Mammary epithelial cell (primary cell): ENCODE measurements at regions of chr1 and their contacts with region 1.

Region 1: DNA sequence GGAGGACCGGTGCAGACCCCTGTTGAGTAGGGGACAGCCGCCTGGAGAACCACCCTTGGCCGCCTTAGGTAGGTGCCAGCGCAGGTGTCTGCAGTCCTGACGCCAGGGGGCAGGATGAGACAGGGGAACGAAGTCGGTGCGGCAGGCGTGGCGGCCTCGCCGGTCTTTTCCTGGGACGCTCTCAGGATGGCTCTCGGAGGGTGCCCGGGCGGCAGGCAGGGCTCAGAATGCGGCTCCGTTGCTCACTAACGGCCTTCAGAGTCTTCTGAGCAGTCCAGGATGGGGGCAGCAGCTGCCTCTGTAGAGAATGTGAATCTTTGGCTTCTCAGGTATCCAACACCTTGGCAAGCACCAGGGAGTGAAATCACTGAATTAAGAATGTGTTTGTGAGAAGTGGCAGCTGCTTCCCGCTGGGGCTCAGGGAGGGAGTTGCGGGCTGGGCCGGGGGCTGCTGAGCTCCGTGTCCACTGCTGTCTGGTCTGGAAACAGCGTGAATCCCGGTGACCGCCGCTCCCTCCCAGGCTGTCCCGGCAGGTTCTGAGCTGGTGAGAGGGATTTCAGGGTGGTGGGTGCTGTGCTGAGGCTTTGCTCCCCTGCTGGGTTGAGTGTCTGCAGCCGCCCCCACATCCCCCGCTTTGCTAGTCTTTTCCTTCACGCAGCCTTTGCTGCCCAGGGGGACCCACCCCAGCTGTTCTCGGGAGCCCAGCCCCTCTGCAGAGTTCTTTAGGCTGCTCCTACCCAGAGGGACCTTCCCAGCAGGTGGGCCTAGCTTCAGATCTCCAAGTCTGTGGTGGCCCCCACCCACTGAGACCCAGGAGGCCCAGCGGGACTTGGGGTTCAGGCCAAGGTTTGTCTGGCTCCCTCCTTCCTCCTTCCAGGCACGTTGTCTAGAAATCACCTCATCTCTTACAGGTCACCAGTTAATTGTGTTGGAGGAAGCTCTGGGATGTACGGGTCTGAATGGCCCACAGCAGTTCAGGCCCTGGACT is 11.1 kb upstream of the C1orf174 start:
- DNase-seq: peak; percentile 52
- H3K4me3 ChIP-seq: peak overlapping the region in 1 of 3 experiments; percentile 19
- H3K27ac ChIP-seq: no peak overlapping the region
- H3K4me1 ChIP-seq: peaks cover 4% of the 10 kb centered on the region
- H3K27me3 ChIP-seq: no peaks in the 10 kb centered on the region
- CTCF ChIP-seq: peak; percentile 80 to 89

Region 2: GRCh38 chr1:3978990-3979325 is 67.8 kb after region 1 on chr1:
- CTCF ChIA-PET with region 1: no interaction called
- dilution Hi-C with region 1: no loop called
- in situ Hi-C with region 1: no loop called
- intact Hi-C with region 1: no loop called
- DNase-seq: no peak
- H3K4me3 ChIP-seq: no peak overlapping the region
- H3K27ac ChIP-seq: no peak overlapping the region
- H3K4me1 ChIP-seq: no peaks in the 10 kb centered on the region
- H3K27me3 ChIP-seq: no peaks in the 10 kb centered on the region
- CTCF ChIP-seq: no peak

Region 3: GRCh38 chr1:3992103-3992556 is 81.0 kb after region 1 on chr1:
- CTCF ChIA-PET with region 1: no interaction called
- dilution Hi-C with region 1: no loop called
- in situ Hi-C with region 1: no loop called
- intact Hi-C with region 1: no loop called
- DNase-seq: no peak
- H3K4me3 ChIP-seq: no peak overlapping the region
- H3K27ac ChIP-seq: no peak overlapping the region
- H3K4me1 ChIP-seq: no peaks in the 10 kb centered on the region
- H3K27me3 ChIP-seq: no peaks in the 10 kb centered on the region
- CTCF ChIP-seq: no peak

Region 4: DNA sequence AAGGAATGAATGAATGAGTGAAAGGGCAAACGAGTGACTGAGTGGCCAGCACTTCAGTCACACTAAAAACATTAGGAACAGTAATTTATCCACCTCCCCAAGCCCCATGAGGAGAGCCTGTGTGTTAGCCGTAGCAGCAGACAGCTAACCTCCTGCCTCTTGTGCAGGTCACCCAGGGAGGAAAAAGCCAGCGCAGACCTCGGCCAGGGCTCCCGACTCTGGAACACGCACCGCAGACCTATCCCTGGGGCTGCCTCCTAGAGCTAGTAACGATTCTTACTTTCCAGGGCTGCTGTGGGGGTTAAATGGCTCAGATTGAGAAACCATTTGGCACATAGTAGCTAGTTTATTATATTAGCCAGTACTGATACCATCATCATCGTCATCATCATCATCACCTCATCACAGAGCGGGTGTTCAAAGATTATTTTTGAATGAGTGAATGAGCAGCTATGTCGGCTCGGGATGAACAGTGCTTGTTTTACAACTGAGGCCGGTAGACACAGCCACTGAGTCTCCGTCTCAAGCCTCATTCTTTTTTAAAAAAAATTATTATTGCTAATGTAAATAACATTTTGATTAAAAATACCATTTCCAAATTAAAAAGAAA is 729.7 kb after region 1 on chr1:
- CTCF ChIA-PET with region 1: no interaction called
- dilution Hi-C with region 1: no loop called
- in situ Hi-C with region 1: loop called in 1 of 2 experiments (anchors 10 kb)
- intact Hi-C with region 1: no loop called
- DNase-seq: no peak
- H3K4me3 ChIP-seq: no peak overlapping the region
- H3K27ac ChIP-seq: no peak overlapping the region
- H3K4me1 ChIP-seq: peaks cover 13% of the 10 kb centered on the region
- H3K27me3 ChIP-seq: no peaks in the 10 kb centered on the region
- CTCF ChIP-seq: no peak

Region 5: GRCh38 chr1:4825800-4826450 is 914.8 kb after region 1 on chr1:
- CTCF ChIA-PET with region 1: no interaction called
- dilution Hi-C with region 1: no loop called
- in situ Hi-C with region 1: no loop called
- intact Hi-C with region 1: loop called (anchors 1 kb)
- DNase-seq: no peak
- H3K4me3 ChIP-seq: no peak overlapping the region
- H3K27ac ChIP-seq: no peak overlapping the region
- H3K4me1 ChIP-seq: no peaks in the 10 kb centered on the region
- H3K27me3 ChIP-seq: no peaks in the 10 kb centered on the region
- CTCF ChIP-seq: peak; percentile 42 to 65

Region 6: GRCh38 chr1:5620990-5621389 is 1709.8 kb after region 1 on chr1:
- CTCF ChIA-PET with region 1: no interaction called
- dilution Hi-C with region 1: no loop called
- in situ Hi-C with region 1: no loop called
- intact Hi-C with region 1: loop called (anchors 2 kb)
- DNase-seq: no peak
- H3K4me3 ChIP-seq: no peak overlapping the region
- H3K27ac ChIP-seq: no peak overlapping the region
- H3K4me1 ChIP-seq: no peaks in the 10 kb centered on the region
- H3K27me3 ChIP-seq: no peaks in the 10 kb centered on the region
- CTCF ChIP-seq: peak; percentile 3 to 39